ENCODE measurements at regions of chr16 and their contacts with region 1.

Region 1: GRCh38 chr16:55154956-55155355 is 169.0 kb upstream of the IRX6 start:
- DNase-seq: no peak
- H3K4me3 ChIP-seq: no peak overlapping the region
- H3K27ac ChIP-seq: no peak overlapping the region
- H3K4me1 ChIP-seq: no peaks in the 10 kb centered on the region
- H3K27me3 ChIP-seq: no peaks in the 10 kb centered on the region; a peak in 1 of 7 replicates
- CTCF ChIP-seq: no peak
- EP300 ChIP-seq: no peak
- POLR2A ChIP-seq: no peak
- RAD21 ChIP-seq: no peak

Region 2: GRCh38 chr16:55043499-55043898 is 111.5 kb before region 1 on chr16:
- CTCF ChIA-PET with region 1: interaction called, 10 read pairs
- POLR2A ChIA-PET with region 1: interaction called, 3 read pairs
- DNase-seq: no peak
- H3K4me3 ChIP-seq: no peak overlapping the region
- H3K27ac ChIP-seq: no peak overlapping the region
- H3K4me1 ChIP-seq: no peaks in the 10 kb centered on the region
- H3K27me3 ChIP-seq: 0 out of 7 replicates have a peak, but pooled peaks cover 0 to 2% (median 0%) of the 10 kb centered on the region in 4 experiments
- CTCF ChIP-seq: peak; percentile 24 to 45 (median 39)
- EP300 ChIP-seq: no peak
- POLR2A ChIP-seq: no peak
- RAD21 ChIP-seq: peak; percentile 14 to 50; a peak in 3 of 4 replicates

Region 3: GRCh38 chr16:55144651-55145050 is 10.3 kb before region 1 on chr16:
- CTCF ChIA-PET with region 1: interaction called, 14 read pairs
- POLR2A ChIA-PET with region 1: no interaction called
- DNase-seq: no peak
- H3K4me3 ChIP-seq: no peak overlapping the region
- H3K27ac ChIP-seq: no peak overlapping the region
- H3K4me1 ChIP-seq: peaks cover 0 to 3% (median 2%) of the 10 kb centered on the region in 4 experiments; a peak in 2 of 7 replicates
- H3K27me3 ChIP-seq: no peaks in the 10 kb centered on the region
- CTCF ChIP-seq: no peak
- EP300 ChIP-seq: no peak
- POLR2A ChIP-seq: no peak
- RAD21 ChIP-seq: no peak

Region 4: GRCh38 chr16:55169780-55170179 is 14.8 kb after region 1 on chr16:
- CTCF ChIA-PET with region 1: interaction called, 10 read pairs
- POLR2A ChIA-PET with region 1: interaction called, 4 read pairs
- DNase-seq: no peak
- H3K4me3 ChIP-seq: no peak overlapping the region
- H3K27ac ChIP-seq: no peak overlapping the region
- H3K4me1 ChIP-seq: peaks cover 0 to 2% (median 0%) of the 10 kb centered on the region in 4 experiments; a peak in 1 of 7 replicates
- H3K27me3 ChIP-seq: no peaks in the 10 kb centered on the region
- CTCF ChIP-seq: no peak
- EP300 ChIP-seq: no peak
- POLR2A ChIP-seq: no peak
- RAD21 ChIP-seq: no peak

Measured in H1 (cell line).